Activated CD4-positive, alpha-beta memory T cell treated with anti-CD3 and anti-CD28 coated beads for 36 hours (primary cell): ENCODE measurements at regions of chr7 and their contacts with region 1.

Region 1: GRCh38 chr7:1086588-1087464 is 1.1 kb upstream of the GPER1 start:
- DNase-seq: peak; percentile 81
- H3K4me3 Mint-ChIP-seq: peak overlapping the region; percentile 54
- H3K27ac Mint-ChIP-seq: no peak overlapping the region
- H3K4me1 Mint-ChIP-seq: peaks cover 14% of the 10 kb centered on the region
- H3K27me3 Mint-ChIP-seq: no peaks in the 10 kb centered on the region

Region 2: GRCh38 chr7:1100386-1100785 is 13.6 kb after region 1 on chr7:
- CTCF ChIA-PET with region 1: interaction called, 16 read pairs
- POLR2A ChIA-PET with region 1: no interaction called
- intact Hi-C with region 1: no loop called
- DNase-seq: no peak
- H3K4me3 Mint-ChIP-seq: no peak overlapping the region
- H3K27ac Mint-ChIP-seq: no peak overlapping the region
- H3K4me1 Mint-ChIP-seq: peaks cover 16% of the 10 kb centered on the region
- H3K27me3 Mint-ChIP-seq: no peaks in the 10 kb centered on the region

Region 3: DNA sequence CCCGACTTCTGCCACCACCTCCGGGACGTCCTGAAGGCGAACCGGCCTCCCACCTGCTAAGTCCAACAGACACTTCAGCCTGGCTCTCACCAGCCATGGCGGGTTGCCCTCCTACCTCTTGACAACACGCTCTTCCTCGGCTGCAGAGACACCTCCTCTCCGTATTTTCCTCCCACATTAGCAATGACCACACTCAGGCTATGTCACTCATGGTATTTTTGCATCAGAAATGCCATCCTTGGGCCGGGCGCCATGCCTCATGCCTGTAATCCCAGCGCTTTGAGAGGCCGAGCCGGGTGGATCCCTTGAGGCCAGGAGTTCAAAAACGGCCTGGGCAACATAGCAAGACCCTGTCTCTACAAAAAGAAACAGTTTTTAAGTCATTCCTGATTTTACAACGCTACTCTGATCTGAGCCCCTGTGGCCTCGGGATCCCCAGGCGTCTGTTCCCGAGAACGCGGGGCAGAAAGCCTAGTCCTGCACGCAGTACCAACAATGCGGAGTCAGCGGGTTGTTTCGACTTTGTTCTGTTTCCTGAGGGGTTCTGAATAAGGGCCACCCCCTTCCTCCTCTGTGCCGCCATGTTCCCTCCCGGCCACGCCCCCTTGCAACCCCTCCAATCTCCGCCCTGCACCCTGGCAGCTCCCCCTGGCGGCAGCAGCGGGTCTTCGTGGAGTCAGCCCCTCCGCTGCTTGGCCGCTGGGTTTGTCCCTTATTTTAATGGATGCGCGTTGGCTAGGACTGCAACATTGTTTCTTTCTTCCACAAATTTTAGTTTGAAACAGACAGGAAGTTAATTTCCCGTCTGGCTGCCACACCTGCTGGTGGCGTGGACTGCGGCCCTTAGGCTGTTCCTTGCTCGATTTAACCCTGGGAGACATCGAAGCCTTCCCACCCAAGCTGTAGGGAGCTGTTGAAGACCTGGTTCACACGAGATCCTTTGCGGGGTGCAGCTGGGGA is 82.9 kb after region 1 on chr7:
- CTCF ChIA-PET with region 1: interaction called, 13 read pairs
- POLR2A ChIA-PET with region 1: no interaction called
- intact Hi-C with region 1: no loop called
- DNase-seq: peak; percentile 98
- H3K4me3 Mint-ChIP-seq: peak overlapping the region; percentile 85
- H3K27ac Mint-ChIP-seq: peak overlapping the region; percentile 91
- H3K4me1 Mint-ChIP-seq: peaks cover 13% of the 10 kb centered on the region
- H3K27me3 Mint-ChIP-seq: no peaks in the 10 kb centered on the region